WTC11 (cell line): ENCODE measurements at regions of chr7 and their contacts with region 1.

Region 1: GRCh38 chr7:100889761-100890634 is 483 bp upstream of the UFSP1 start:
- DNase-seq: peak; percentile 92
- ATAC-seq: peak; percentile 82
- H3K4me3 Mint-ChIP-seq: peak overlapping the region; percentile 88
- H3K27ac Mint-ChIP-seq: peak overlapping the region; percentile 97
- H3K4me1 Mint-ChIP-seq: peaks cover 41% of the 10 kb centered on the region
- H3K27me3 Mint-ChIP-seq: peaks cover 5% of the 10 kb centered on the region
- CTCF ChIP-seq: no peak

Region 2: DNA sequence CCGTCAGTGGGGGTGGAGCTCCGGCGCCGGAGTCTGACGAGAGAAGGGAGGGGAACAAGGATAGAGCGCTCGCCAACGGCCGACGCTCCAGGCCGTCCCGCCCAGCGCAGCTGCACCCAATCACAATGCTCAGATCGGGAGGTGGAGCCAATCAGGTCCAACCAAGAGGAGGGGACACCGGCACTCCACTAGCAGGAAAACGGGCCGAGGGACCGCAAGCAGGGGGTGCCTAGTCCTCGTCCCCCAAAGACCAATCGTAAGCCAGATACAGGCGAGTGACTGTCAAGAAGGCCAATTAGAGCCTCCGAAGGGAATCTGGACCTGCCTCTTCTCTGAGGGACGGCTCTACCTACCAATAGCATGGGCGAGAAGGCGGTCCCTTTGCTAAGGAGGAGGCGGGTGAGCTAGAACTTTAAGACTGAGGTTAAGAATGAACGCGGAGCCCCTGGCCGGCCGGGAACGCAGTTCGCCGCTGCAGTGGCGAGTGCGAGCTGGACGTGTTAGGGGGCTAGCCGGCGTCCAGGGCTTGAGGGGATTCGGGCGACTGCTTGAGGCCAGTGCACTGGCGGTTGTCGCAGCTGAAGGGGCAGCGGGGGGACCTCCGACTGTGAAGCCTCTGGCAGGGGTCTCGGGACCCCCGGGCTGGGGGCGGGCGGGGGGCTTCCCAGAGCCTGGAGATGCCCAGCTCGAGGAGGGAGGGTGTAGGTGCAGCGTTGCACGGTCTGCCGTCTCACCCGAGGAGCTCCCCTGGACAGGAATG is 303.6 kb before region 1 on chr7 and contains the start of gene FBXO24:
- CTCF ChIA-PET with region 1: no interaction called
- POLR2A ChIA-PET with region 1: interaction called, 10 read pairs
- DNase-seq: peak; percentile 99
- ATAC-seq: peak; percentile 85
- H3K4me3 Mint-ChIP-seq: peak within 1 kb of the TSS; percentile 99
- H3K27ac Mint-ChIP-seq: peak within 1 kb of the TSS; percentile 100
- H3K4me1 Mint-ChIP-seq: peaks cover 42% of the 10 kb centered on the region
- H3K27me3 Mint-ChIP-seq: peaks cover 30% of the 10 kb centered on the region
- CTCF ChIP-seq: no peak
- total RNA-seq, gene FBXO24: 0.70 to 1.3 TPM (median 0.94 TPM) in 3 replicates

Region 3: DNA sequence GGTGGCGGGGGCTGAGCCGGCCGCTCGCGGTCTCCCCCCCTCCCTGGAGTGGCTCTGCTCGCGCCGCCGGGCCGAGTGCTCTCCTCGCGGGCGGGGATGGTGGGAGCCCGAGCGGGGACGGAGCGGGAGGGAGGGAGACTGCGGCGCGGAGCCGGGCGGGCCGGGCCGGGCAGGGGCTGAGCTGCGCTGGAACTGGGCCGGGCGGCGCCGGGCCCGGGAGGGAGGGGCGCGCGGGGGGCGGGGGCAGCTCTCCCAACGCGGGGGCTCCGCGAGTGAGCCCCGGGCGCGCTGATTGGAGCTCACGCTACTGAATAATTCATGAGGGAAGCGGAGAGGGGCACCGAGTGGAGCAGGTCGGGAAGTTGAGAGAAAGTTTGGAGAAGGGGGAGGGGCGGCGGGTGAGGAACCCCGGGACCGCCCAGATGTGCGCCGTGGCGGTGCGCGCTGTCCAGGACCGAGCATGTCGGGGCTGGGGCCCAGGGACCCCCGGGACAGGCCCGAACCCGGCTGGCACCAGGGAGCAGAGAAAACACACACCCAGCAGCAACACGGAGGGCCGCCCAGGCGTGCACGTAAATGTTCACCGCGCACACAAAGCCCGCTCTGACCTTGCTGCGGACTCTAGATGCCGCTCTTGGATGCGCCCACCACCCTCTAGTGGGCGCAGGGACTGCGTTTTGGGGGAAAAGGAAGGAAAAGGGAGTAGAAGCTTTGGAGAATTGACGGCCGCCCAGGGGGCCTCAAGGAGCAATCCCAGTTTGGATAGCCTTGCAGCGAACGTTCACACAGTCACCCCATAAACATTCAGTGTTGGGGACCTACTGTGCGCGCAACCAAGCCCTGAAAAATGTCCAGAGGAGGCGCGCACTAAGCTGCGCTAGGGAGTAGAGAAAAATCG is 62.4 kb before region 1 on chr7 and contains the start of gene EPHB4:
- CTCF ChIA-PET with region 1: interaction called, 18 read pairs
- POLR2A ChIA-PET with region 1: interaction called, 8 read pairs
- DNase-seq: peak; percentile 90
- ATAC-seq: peak; percentile 82
- H3K4me3 Mint-ChIP-seq: peak within 1 kb of the TSS; percentile 98
- H3K27ac Mint-ChIP-seq: peak within 1 kb of the TSS; percentile 99
- H3K4me1 Mint-ChIP-seq: peaks cover 28% of the 10 kb centered on the region
- H3K27me3 Mint-ChIP-seq: no peaks in the 10 kb centered on the region
- CTCF ChIP-seq: no peak
- total RNA-seq, gene EPHB4: 99.7 to 120 TPM (median 104 TPM) in 3 replicates

Region 4: DNA sequence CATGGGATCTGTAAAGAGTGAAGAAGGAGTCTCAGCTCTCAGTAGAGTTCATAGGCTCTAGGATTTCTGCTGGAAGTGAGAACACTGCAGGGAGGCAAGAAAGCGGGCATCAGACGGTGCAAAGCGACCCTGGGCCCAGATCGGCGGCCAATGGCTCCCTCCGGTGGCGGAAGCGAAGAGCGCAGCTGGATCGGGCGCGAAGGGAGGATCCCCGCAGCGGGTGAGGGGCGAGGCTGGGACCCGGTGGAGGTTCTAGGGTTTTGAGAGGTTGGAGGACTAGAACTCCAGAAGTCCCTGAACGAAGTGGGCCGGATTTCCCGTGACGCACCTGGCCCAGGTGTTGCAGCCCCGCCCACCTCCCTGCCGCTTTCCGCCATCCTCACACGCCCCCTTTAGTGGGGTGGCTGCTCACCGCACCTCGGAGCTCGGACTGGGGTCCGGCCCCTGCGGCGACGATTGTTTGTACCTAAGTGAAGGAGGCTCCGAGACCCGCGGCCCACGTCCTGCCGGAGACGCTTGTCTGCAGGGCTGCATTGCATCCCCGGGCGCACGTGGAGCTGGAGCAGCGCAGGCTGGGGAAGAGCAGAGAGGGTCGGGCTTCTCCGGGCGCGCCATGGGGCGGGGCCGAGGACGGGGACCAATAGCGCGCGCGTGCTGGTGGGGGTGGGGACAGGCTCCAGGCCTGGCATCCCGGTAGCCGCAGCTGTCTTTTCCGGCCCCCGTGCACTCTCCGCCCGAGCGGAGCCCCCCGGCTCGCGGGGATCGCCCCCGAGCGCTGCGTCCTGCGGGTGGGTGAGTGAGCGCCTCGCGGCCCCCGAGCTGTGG is 37.7 kb before region 1 on chr7 and contains the start of gene SLC12A9:
- CTCF ChIA-PET with region 1: interaction called, 12 read pairs
- POLR2A ChIA-PET with region 1: interaction called, 9 read pairs
- DNase-seq: peak; percentile 93
- ATAC-seq: peak; percentile 95
- H3K4me3 Mint-ChIP-seq: peak within 1 kb of the TSS; percentile 93
- H3K27ac Mint-ChIP-seq: peak within 1 kb of the TSS; percentile 67
- H3K4me1 Mint-ChIP-seq: 0 out of 2 replicates have a peak, but pooled peaks cover 7% of the 10 kb centered on the region
- H3K27me3 Mint-ChIP-seq: no peaks in the 10 kb centered on the region
- CTCF ChIP-seq: peak; percentile 78
- total RNA-seq, gene SLC12A9: 32.6 to 39.3 TPM (median 34.1 TPM) in 3 replicates

Region 5: DNA sequence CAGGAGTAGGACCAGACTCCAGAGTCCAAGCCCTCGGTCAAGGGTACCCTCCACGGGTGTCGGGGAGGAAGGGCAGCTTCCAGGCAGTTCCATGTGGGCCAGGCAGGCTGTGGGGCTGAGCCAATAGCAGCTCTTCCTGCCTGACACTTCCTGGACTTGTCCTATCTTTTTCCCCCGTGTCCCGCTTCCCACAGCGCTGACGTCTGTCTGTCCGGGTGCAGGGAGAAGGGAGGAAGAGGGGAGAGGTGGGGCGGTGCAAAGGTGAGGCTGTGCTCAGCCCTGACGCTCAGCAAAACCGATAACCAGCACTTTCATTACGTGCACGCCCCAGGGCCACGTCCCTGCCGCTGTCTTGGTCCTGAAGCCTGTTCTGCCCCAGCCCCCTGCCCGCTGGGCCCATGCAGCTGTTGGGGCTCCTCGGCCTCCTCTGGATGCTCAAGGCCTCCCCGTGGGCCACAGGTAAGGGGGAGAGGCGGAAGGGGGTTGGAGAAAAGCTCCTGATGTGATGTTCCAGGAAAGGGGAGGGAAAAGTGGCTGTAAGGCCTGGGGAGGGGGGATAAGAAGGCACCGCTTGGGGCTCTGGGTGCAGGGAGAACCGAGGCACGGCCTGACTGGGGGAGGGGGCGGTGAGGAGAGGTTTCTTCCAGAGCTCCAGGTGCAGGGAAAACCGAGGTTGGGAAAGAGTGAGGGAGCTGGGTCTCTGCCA is 59.4 kb after region 1 on chr7 and contains the start of gene MUC3A:
- CTCF ChIA-PET with region 1: interaction called, 30 read pairs
- POLR2A ChIA-PET with region 1: interaction called, 3 read pairs
- DNase-seq: peak; percentile 46
- ATAC-seq: peak; percentile 25
- H3K4me3 Mint-ChIP-seq: peak within 1 kb of the TSS; percentile 18; the same call in 1 of the 2 replicates
- H3K27ac Mint-ChIP-seq: no peak within 1 kb of the TSS
- H3K4me1 Mint-ChIP-seq: peaks cover 40% of the 10 kb centered on the region
- H3K27me3 Mint-ChIP-seq: no peaks in the 10 kb centered on the region; the same call in 1 of the 2 replicates
- CTCF ChIP-seq: no peak
- total RNA-seq, gene MUC3A: 50.6 to 74.8 TPM (median 67.2 TPM) in 3 replicates

Region 6: GRCh38 chr7:101058355-101058754 is 168.4 kb after region 1 on chr7:
- CTCF ChIA-PET with region 1: interaction called, 23 read pairs
- POLR2A ChIA-PET with region 1: interaction called, 4 read pairs
- DNase-seq: peak; percentile 81
- ATAC-seq: peak; percentile 51; the same call in 1 of the 2 replicates
- H3K4me3 Mint-ChIP-seq: no peak overlapping the region
- H3K27ac Mint-ChIP-seq: no peak overlapping the region
- H3K4me1 Mint-ChIP-seq: peaks cover 2% of the 10 kb centered on the region; the same call in 1 of the 2 replicates
- H3K27me3 Mint-ChIP-seq: peaks cover 32% of the 10 kb centered on the region
- CTCF ChIP-seq: no peak

Region 7: DNA sequence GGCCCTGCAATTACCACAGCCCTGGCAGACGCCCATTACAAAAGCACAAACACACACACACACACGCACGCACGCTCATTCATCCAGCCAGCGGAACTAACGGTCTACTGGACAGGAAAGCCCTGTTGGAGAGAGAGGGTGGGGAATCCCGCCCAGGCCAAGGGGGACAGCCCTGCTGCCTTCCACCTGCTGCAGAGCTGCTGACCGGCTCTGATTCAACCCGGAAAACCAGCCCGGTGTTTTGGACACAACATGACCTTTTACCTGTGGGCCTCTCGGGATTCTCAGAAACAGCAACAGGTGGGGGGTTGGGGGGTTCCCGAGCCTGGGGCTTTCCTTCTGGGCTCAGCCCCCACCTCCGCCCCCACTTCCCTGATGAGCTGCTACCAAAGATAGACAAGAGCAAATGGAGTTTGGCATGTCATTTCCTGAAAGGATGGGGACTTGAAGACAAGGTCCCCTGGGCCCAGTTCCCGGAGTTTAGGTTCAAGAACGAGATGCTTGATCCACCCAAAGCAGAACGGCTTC is 218.4 kb after region 1 on chr7:
- CTCF ChIA-PET with region 1: no interaction called
- POLR2A ChIA-PET with region 1: no interaction called
- DNase-seq: no peak
- ATAC-seq: no peak; the same call in 1 of the 2 replicates
- H3K4me3 Mint-ChIP-seq: no peak overlapping the region
- H3K27ac Mint-ChIP-seq: no peak overlapping the region
- H3K4me1 Mint-ChIP-seq: peaks cover 4% of the 10 kb centered on the region; the same call in 1 of the 2 replicates
- H3K27me3 Mint-ChIP-seq: no peaks in the 10 kb centered on the region; the same call in 1 of the 2 replicates
- CTCF ChIP-seq: no peak

Region 8: GRCh38 chr7:101138213-101138870 is 248.3 kb after region 1 on chr7:
- CTCF ChIA-PET with region 1: interaction called, 17 read pairs
- POLR2A ChIA-PET with region 1: interaction called, 4 read pairs
- DNase-seq: peak; percentile 62
- ATAC-seq: peak; percentile 73
- H3K4me3 Mint-ChIP-seq: peak overlapping the region; percentile 46
- H3K27ac Mint-ChIP-seq: no peak overlapping the region
- H3K4me1 Mint-ChIP-seq: peaks cover 52% of the 10 kb centered on the region
- H3K27me3 Mint-ChIP-seq: peaks cover 3% of the 10 kb centered on the region; the same call in 1 of the 2 replicates
- CTCF ChIP-seq: peak; percentile 59